Activated CD4-positive, alpha-beta memory T cell treated with anti-CD3 and anti-CD28 coated beads for 36 hours (primary cell): ENCODE measurements at regions of chr3 and their contacts with region 1.

Region 1: DNA sequence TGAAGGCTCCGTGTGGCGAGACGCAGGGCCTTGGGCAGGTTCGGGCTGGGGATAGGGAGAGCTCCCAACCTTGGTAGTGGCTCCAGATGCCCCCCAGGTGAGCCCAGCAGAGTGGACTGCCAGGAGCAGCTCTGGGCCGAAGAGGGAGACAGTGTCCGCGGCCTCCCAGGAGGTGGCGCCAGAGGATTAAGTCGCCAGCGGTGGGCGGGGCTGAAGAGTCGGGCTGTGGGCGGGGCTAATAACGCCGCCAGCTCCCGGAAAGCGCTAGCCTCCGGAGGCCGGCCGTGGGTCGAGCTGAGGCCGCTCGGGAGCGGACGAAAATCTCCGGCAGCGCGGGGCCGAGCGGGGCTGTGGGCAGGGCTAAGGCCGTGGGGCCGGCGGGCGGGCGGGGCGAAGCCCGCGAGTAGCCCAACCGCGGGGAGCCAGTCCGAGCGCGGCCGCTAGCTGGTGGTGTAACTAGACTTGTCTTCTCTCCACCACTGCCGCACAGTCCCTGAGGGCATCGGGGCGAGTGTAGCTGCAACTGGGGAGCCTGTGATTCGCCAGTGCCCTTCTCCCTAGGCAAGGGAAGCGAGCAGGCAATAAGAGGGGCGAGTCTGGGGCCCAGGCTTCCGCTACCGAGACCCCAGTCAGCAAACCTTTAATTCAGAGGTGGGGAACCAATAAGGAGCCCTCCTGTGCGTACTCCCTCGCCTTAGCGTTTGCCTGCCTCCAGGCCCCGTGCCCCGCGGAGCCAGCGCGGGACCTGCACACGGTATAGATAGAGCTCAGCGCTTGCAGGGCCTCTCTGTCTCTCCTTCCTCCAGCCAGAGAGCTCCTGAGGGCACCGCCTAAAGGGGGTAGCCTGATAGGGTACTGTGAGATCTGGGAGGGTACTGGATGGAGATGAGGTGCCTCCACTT is 14.4 kb upstream of the BSN start:
- DNase-seq: peak; percentile 94
- H3K4me3 Mint-ChIP-seq: peak overlapping the region; percentile 69
- H3K27ac Mint-ChIP-seq: no peak overlapping the region
- H3K4me1 Mint-ChIP-seq: peaks cover 3% of the 10 kb centered on the region
- H3K27me3 Mint-ChIP-seq: peaks cover 5% of the 10 kb centered on the region

Region 2: DNA sequence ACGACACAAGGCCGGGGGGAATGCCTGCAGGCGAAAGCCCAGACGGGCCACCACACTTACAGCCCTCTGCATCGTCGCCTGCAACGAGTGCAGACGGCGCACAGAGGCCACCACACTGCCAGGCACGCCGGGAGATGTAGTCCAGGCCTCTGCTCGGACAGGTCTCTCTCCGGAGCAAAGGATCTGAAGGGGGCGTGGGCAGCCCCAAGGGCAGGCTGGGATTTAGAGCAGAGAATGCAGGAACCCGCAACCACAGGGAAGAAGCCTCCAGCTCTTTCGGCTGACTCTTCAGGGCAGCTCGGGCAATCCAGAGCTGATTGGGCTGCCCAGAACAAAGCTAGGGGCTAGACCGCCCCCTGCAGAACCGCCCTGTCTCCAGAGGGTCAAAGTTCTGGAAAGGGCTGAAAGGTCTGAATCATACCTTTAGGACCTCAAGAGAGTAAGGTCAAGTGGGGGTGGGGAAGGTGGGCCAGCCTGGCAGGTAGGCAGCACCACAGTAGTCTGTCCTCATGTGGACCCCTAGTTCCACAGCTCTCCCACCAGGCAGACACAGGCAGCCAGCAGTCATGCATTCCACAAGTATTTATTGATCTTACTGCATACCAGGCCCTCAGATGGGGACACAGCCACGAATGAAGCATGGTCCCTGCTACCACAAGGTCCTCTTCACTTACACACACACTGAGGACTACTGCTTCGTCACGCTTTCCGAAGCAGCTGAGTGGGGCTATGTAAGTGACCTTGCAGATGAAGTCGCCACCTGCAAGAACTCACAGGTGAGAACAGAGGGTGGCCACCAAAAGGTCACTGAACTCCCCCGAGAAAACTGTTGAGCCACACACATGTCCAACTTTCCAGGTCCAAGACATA is 117.3 kb before region 1 on chr3 and contains the start of gene AMT:
- CTCF ChIA-PET with region 1: no interaction called
- POLR2A ChIA-PET with region 1: no interaction called
- intact Hi-C with region 1: no loop called
- DNase-seq: no peak
- H3K4me3 Mint-ChIP-seq: no peak within 1 kb of the TSS
- H3K27ac Mint-ChIP-seq: peak within 1 kb of the TSS; percentile 48
- H3K4me1 Mint-ChIP-seq: peaks cover 39% of the 10 kb centered on the region
- H3K27me3 Mint-ChIP-seq: no peaks in the 10 kb centered on the region
- total RNA-seq, gene AMT: 2.4 to 2.6 TPM

Region 3: GRCh38 chr3:49518016-49518415 is 21.9 kb before region 1 on chr3:
- CTCF ChIA-PET with region 1: interaction called, 14 read pairs
- POLR2A ChIA-PET with region 1: no interaction called
- intact Hi-C with region 1: no loop called
- DNase-seq: no peak
- H3K4me3 Mint-ChIP-seq: no peak overlapping the region
- H3K27ac Mint-ChIP-seq: no peak overlapping the region
- H3K4me1 Mint-ChIP-seq: peaks cover 3% of the 10 kb centered on the region
- H3K27me3 Mint-ChIP-seq: no peaks in the 10 kb centered on the region

Region 4: DNA sequence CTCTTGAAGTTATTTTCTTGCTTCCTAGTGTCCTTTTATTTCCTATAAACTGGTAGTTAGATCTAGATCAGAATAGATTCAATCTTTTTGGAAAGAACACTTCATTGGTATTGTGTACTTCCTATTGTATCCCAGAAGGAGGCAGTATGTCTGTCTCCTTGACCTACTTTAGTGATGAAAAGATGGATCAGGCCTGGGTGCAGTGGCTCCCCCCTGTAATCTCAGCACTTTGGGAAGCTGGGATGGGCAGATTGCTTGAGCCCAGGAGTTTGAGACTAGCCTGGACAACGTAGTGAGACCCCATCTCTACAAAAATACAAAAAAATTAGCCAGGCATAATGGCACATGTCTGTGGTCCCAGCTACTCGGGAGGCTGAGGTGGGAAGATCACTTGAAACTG is 26.4 kb after region 1 on chr3:
- CTCF ChIA-PET with region 1: interaction called, 12 read pairs
- POLR2A ChIA-PET with region 1: no interaction called
- intact Hi-C with region 1: no loop called
- DNase-seq: no peak
- H3K4me3 Mint-ChIP-seq: no peak overlapping the region
- H3K27ac Mint-ChIP-seq: no peak overlapping the region
- H3K4me1 Mint-ChIP-seq: no peaks in the 10 kb centered on the region
- H3K27me3 Mint-ChIP-seq: peaks cover 9% of the 10 kb centered on the region

Region 5: DNA sequence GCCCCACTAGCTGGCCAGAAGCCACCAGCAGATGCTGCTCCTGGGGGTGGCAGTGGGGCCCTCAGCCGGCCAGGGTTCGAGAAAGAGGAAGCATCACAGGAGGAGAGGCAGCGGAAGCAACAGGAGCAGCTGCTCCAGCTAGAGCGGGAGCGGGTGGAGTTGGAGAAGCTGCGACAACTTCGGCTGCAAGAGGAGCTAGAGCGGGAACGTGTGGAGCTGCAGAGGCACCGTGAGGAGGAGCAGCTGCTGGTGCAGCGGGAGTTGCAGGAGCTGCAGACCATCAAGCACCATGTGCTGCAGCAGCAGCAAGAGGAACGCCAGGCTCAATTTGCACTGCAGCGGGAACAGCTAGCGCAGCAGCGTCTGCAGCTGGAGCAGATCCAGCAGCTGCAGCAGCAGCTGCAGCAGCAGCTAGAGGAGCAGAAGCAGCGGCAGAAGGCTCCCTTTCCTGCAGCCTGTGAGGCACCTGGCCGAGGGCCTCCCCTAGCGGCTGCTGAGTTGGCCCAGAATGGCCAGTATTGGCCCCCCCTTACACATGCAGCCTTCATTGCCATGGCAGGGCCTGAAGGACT is 116.7 kb after region 1 on chr3:
- CTCF ChIA-PET with region 1: interaction called, 12 read pairs
- POLR2A ChIA-PET with region 1: no interaction called
- intact Hi-C with region 1: no loop called
- DNase-seq: no peak
- H3K4me3 Mint-ChIP-seq: no peak overlapping the region
- H3K27ac Mint-ChIP-seq: no peak overlapping the region
- H3K4me1 Mint-ChIP-seq: no peaks in the 10 kb centered on the region
- H3K27me3 Mint-ChIP-seq: no peaks in the 10 kb centered on the region

Region 6: GRCh38 chr3:49673715-49674496 is 134.0 kb after region 1 on chr3 and contains the start of gene APEH:
- CTCF ChIA-PET with region 1: interaction called, 308 read pairs
- POLR2A ChIA-PET with region 1: interaction called, 18 read pairs
- intact Hi-C with region 1: loop called (anchors 1 kb)
- DNase-seq: peak; percentile 99
- H3K4me3 Mint-ChIP-seq: peak within 1 kb of the TSS; percentile 93
- H3K27ac Mint-ChIP-seq: peak within 1 kb of the TSS; percentile 97
- H3K4me1 Mint-ChIP-seq: peaks cover 32% of the 10 kb centered on the region
- H3K27me3 Mint-ChIP-seq: no peaks in the 10 kb centered on the region
- total RNA-seq, gene APEH: 141 to 143 TPM

Region 7: GRCh38 chr3:49802719-49803464 is 263.0 kb after region 1 on chr3 and contains the start of gene INKA1:
- CTCF ChIA-PET with region 1: interaction called, 16 read pairs
- POLR2A ChIA-PET with region 1: no interaction called
- intact Hi-C with region 1: no loop called
- DNase-seq: peak; percentile 92
- H3K4me3 Mint-ChIP-seq: peak within 1 kb of the TSS; percentile 88
- H3K27ac Mint-ChIP-seq: peak within 1 kb of the TSS; percentile 82
- H3K4me1 Mint-ChIP-seq: peaks cover 37% of the 10 kb centered on the region
- H3K27me3 Mint-ChIP-seq: peaks cover 8% of the 10 kb centered on the region
- total RNA-seq, gene INKA1: 1.0 to 1.2 TPM